Activated CD4-positive, alpha-beta T cell treated with anti-CD3 and anti-CD28 coated beads, Interleukin-2, amount 10 ng/mL, durations not matched to agents 24 days and 14 days (primary cell): ENCODE measurements at regions of chr2 and their contacts with region 1.

Region 1: GRCh38 chr2:144183727-144184126 is 336.2 kb downstream of the ZEB2 start:
- DNase-seq: peak; percentile 92
- H3K4me3 Mint-ChIP-seq: peak overlapping the region; percentile 60
- H3K27ac Mint-ChIP-seq: peak overlapping the region; percentile 86
- H3K4me1 Mint-ChIP-seq: peaks cover 28% of the 10 kb centered on the region
- H3K27me3 Mint-ChIP-seq: no peaks in the 10 kb centered on the region

Region 2: GRCh38 chr2:143705108-143705686 is 478.5 kb before region 1 on chr2:
- intact Hi-C with region 1: loop called (anchors 10 kb)
- DNase-seq: no peak
- H3K4me3 Mint-ChIP-seq: no peak overlapping the region
- H3K27ac Mint-ChIP-seq: peak overlapping the region; percentile 25
- H3K4me1 Mint-ChIP-seq: peaks cover 16% of the 10 kb centered on the region
- H3K27me3 Mint-ChIP-seq: no peaks in the 10 kb centered on the region

Region 3: GRCh38 chr2:143901185-143901842 is 282.4 kb before region 1 on chr2:
- intact Hi-C with region 1: loop called (anchors 10 kb)
- DNase-seq: no peak
- H3K4me3 Mint-ChIP-seq: no peak overlapping the region
- H3K27ac Mint-ChIP-seq: no peak overlapping the region
- H3K4me1 Mint-ChIP-seq: peaks cover 5% of the 10 kb centered on the region
- H3K27me3 Mint-ChIP-seq: peaks cover 24% of the 10 kb centered on the region

Region 4: DNA sequence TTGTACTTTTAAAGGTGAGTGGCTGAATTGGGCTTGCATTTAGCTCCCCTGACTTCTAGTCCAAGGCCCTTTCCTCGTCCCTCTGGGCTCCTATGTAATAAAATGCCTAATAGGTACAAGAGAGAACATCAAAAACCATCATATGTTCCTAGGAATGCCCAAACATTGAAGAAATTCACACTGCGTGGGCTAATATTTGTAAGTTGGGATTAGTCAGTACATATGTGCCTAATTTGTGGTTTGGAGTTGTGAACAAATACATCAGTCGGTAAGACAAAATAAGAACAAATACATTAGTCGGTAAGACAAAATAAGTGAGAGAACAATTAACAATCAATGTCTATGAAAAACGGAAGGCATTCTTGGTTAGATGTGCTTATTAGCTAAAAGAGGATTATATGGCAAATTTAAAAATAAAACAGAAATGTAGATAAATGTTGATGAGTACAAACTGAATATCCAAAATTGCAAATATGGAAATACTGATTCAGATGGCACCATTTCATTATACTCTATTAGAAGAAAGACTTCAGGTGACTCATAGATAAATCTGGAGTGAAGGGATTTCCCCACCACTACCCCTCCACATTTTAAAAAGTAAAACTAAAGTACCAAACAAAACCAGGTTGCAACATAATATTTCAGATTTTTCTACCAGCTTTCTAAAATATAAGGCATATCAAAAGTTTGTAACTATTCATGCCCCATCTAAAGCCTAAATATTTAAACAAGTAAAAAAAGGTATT is 10.8 kb after region 1 on chr2:
- intact Hi-C with region 1: loop called (anchors 1 kb)
- DNase-seq: no peak
- H3K4me3 Mint-ChIP-seq: peak overlapping the region; percentile 11
- H3K27ac Mint-ChIP-seq: peak overlapping the region; percentile 45
- H3K4me1 Mint-ChIP-seq: peaks cover 27% of the 10 kb centered on the region
- H3K27me3 Mint-ChIP-seq: no peaks in the 10 kb centered on the region

Region 5: GRCh38 chr2:144230448-144231085 is 46.8 kb after region 1 on chr2:
- intact Hi-C with region 1: loop called (anchors 5 kb)
- DNase-seq: no peak
- H3K4me3 Mint-ChIP-seq: no peak overlapping the region
- H3K27ac Mint-ChIP-seq: no peak overlapping the region
- H3K4me1 Mint-ChIP-seq: peaks cover 38% of the 10 kb centered on the region
- H3K27me3 Mint-ChIP-seq: no peaks in the 10 kb centered on the region

Region 6: DNA sequence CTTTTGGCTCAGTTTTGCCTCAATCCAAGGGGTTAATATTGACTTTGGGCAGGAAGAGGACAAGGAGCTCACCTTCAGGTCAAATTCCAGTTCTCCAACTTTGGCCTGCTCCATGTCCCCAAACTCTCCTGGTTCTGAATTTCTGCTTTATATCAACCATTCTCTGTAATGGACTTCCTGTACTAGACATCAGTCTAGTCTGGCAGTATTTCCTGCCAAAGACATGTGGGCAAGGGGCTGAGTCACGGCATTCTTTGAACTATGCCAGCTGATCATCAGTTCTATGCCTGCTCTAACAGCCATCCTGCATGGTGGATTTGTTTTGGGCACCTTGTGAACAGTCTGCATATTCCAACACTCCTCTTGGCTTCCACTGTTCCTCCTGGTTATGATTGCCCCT is 136.8 kb after region 1 on chr2:
- intact Hi-C with region 1: loop called (anchors 2 kb)
- DNase-seq: peak; percentile 74
- H3K4me3 Mint-ChIP-seq: peak overlapping the region; percentile 50
- H3K27ac Mint-ChIP-seq: peak overlapping the region; percentile 12
- H3K4me1 Mint-ChIP-seq: peaks cover 40% of the 10 kb centered on the region
- H3K27me3 Mint-ChIP-seq: no peaks in the 10 kb centered on the region

Region 7: DNA sequence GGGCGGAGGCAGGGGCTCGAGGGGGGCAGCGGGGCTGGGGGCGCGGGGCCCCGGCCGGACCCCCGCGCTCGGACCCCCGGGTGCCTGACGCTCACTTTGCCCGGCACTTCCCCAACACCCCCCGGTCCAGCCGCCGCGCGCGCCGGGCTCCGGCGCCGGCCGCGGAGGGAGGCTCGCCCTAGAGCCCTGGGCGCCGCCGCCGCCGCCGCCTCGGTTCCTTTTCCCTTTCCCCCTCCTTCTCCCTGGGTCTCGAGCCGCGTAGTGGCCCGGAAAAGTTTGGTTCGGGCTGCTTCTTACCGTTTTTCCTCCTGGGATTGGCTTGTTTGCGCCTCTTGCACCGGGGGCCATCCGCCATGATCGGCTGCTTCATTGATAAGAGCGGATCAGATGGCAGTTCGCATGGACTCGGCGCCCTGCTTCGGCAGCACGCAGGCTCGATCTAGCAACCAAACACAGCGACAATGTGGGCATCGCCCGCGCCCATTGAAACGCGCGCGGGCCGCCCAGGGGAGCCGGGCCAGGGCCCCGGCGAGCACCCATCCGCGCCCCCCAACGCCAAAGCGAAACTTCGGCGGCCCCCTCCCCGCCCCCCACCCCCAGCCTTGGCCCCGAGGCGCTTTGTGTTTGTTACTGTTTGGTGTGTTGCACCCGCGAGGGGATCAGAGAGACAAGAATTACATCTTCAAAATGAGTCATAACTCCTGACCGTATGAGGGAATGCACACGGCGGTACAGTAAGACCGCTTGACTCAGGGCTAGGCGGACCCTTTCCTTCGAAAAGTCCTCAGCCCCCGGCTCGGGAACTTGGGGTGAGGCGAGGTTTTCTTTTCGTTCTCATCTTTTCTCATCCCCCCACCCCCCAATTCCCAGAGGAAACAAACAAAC is 333.5 kb after region 1 on chr2:
- intact Hi-C with region 1: loop called (anchors 1 kb)
- DNase-seq: peak; percentile 85
- H3K4me3 Mint-ChIP-seq: no peak overlapping the region
- H3K27ac Mint-ChIP-seq: no peak overlapping the region
- H3K4me1 Mint-ChIP-seq: peaks cover 17% of the 10 kb centered on the region
- H3K27me3 Mint-ChIP-seq: peaks cover 49% of the 10 kb centered on the region